Left cardiac atrium (tissue), 4 donors: ENCODE measurements at regions of chr1 and their contacts with region 1.

Region 1: GRCh38 chr1:192808518-192809306 is at the start of gene RGS2:
- DNase-seq: peak; percentile 93
- ATAC-seq: peak; percentile 98
- total RNA-seq, gene RGS2: 33.1 to 89.7 TPM

Region 2: DNA sequence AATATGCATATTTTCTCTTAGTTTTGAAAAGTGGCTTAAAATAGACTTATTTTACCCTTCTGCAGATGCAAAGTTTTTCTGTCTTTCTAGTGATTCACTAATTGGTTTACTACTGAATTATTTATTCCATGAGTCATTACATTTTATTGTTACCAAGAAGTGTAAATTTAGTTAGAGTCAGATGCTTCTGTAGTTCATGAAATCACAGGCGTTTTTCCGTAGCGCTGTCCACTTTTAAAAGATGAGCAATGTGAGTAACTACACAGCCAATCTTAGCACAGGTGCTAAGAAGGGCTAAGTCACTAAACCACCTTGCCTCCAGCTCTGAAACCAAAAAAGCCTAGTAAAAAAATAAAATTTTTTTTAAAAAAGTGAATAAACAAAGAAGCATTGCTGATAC is 148.1 kb before region 1 on chr1:
- intact Hi-C with region 1: no loop called
- DNase-seq: no peak
- ATAC-seq: no peak

Region 3: DNA sequence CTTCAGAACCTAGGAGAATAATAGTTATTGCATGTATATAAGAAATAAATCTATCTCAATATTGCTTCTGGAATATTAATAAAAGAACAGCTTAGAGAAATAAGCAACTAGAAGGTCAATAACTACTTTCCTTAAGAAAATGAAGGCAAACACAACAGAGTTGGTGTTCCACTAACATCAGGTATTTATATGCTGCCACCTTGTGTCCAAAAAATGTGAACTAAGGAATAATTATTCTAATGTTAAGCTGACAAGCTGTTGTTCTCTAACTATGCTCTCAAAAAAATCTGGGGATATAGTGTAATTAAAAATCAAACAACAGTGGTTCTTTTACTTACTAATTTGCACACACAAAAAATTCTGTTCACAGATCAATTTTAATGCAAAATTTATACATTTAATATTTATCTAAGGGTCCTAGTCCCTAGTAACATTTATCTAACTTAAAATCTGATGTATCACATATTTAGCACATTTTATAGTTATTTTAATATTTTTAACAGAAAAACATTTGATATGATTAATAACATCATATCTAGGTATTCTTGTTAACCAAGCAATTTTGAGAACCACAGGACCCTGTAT is 210.8 kb after region 1 on chr1:
- intact Hi-C with region 1: loop called in 1 of 2 experiments (anchors 5 kb)
- DNase-seq: no peak
- ATAC-seq: peak; percentile 58 to 70

Region 4: GRCh38 chr1:193121616-193122593 is 313.2 kb after region 1 on chr1 and contains the start of gene CDC73:
- intact Hi-C with region 1: loop called in 1 of 2 experiments (anchors 10 kb)
- DNase-seq: peak; percentile 98
- ATAC-seq: peak; percentile 99
- total RNA-seq, gene CDC73: 40.4 to 42.8 TPM